Activated CD4-positive, alpha-beta T cell treated with anti-CD3 and anti-CD28 coated beads for 36 hours (primary cell): ENCODE measurements at regions of chr1 and their contacts with region 1.

Region 1: DNA sequence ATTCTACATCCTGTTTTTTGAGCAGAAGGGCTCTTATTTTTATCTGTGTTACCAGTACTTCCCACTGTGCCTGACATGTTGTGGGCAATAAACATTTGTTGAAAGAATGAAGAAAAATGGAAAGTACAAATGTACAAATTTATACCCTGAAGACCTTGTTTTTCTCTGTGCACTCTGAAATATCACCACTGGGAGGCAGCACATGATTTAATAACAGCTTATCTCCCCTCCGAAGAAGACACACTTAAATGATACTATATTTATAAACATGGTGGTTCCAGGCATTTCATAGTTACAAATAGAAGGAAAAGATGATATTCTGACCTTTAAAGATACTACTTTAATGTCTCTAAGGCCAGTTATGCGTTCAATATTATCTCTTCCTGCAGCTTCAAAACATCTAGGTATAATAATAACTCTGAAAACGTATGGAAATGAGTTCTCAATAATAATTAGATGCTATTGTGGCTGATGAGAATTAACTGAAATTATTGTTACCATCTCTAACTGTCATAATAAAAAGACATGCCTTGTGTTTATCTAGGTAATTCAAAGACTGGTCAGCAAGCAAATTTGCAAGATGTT is 12.8 kb downstream of the DYNLT5 start:
- DNase-seq: peak; percentile 69
- ATAC-seq: peak; percentile 62
- H3K4me3 Mint-ChIP-seq: no peak overlapping the region
- H3K27ac Mint-ChIP-seq: no peak overlapping the region
- H3K4me1 Mint-ChIP-seq: peaks cover 22% of the 10 kb centered on the region
- H3K27me3 Mint-ChIP-seq: no peaks in the 10 kb centered on the region

Region 2: GRCh38 chr1:66752671-66753371 is 12.3 kb before region 1 on chr1:
- CTCF ChIA-PET with region 1: interaction called, 15 read pairs
- POLR2A ChIA-PET with region 1: no interaction called
- intact Hi-C with region 1: no loop called
- DNase-seq: no peak
- ATAC-seq: no peak
- H3K4me3 Mint-ChIP-seq: peak overlapping the region; percentile 53
- H3K27ac Mint-ChIP-seq: no peak overlapping the region
- H3K4me1 Mint-ChIP-seq: peaks cover 13% of the 10 kb centered on the region
- H3K27me3 Mint-ChIP-seq: peaks cover 37% of the 10 kb centered on the region

Region 3: DNA sequence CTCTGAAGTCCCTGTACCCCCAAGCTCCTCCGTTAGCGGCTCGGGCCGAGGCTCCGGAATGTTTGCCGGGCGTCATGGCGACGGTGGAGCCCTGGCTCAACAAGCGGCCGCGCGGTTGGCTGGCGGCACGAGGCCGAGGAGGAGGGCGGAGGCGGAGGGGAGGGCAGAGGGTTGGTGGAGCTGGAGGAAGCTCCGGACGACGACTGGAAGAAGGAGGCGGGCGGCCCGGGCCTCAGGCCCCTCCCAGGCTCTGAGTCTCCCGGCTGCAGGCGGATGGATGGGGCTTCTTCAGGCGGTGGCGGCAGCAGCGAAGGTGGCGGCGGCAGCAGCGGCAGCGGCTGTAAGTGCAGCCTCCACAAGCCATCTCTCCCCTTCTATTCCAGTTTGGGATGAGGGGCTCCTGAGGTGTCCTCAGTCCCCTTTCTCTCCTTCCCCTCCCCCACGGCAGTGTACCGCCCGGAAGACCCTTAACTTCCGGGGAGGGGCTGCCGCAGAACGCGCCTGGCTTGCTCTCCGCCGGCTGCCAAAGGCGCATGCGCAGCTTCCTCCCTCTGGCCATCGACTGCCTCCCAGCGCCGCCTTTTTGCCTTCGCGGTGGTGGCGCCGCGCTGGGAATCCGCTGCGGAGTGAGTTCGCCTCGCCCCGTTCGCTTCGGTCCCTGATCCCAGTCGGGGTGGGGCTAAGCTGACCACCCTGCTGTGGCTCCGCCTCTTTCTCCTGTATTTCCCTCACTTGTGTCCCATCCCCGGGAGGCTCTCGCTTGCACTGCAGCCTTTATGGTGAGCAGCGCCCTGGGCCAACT is 159.9 kb after region 1 on chr1 and contains the starts of genes DNAI4 and MIER1:
- CTCF ChIA-PET with region 1: interaction called, 4 read pairs
- POLR2A ChIA-PET with region 1: no interaction called
- intact Hi-C with region 1: loop called (anchors 2 kb)
- DNase-seq: peak; percentile 99
- ATAC-seq: peak; percentile 94
- H3K4me3 Mint-ChIP-seq: peak within 1 kb of the TSS; percentile 93
- H3K27ac Mint-ChIP-seq: peak within 1 kb of the TSS; percentile 92
- H3K4me1 Mint-ChIP-seq: peaks cover 52% of the 10 kb centered on the region
- H3K27me3 Mint-ChIP-seq: no peaks in the 10 kb centered on the region
- total RNA-seq, gene DNAI4: 0.87 to 3.6 TPM
- total RNA-seq, gene MIER1: 49.7 to 51.5 TPM

Region 4: DNA sequence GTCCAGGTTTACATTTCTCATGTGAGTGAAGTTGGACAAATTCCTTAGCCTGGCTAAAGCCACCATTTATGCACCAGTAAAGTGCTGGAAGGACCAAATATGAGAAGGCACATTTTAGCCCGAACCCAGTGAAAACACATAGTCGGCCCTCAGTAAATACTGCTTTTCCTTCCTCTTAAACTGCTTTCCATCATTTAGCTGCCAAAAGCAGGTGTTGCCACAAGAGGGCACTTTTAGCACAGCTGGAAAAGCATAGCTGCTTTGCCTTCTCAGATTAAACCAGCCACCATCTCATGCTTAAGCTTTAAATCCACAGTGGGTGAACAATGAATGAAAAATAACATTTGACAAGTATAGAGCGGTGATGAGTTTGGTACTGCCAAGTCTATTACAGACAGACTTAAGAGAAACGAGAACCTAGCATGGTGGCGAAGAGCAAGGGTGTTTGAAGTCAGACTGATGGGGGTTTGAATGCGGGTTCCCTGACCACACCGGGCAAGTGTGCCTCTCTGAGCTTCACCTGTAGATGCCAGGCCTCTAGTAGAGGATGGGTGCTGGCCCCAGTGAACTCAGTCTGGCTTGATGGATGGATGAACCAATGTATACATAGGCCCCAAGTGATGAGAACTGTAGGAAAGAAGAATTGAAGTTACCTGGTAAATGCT is 231.1 kb after region 1 on chr1:
- CTCF ChIA-PET with region 1: interaction called, 4 read pairs
- POLR2A ChIA-PET with region 1: no interaction called
- intact Hi-C with region 1: loop called in 1 of 2 experiments (anchors 2 kb)
- DNase-seq: peak; percentile 79
- ATAC-seq: peak; percentile 79
- H3K4me3 Mint-ChIP-seq: no peak overlapping the region
- H3K27ac Mint-ChIP-seq: peak overlapping the region; percentile 53
- H3K4me1 Mint-ChIP-seq: peaks cover 16% of the 10 kb centered on the region
- H3K27me3 Mint-ChIP-seq: no peaks in the 10 kb centered on the region

Region 5: DNA sequence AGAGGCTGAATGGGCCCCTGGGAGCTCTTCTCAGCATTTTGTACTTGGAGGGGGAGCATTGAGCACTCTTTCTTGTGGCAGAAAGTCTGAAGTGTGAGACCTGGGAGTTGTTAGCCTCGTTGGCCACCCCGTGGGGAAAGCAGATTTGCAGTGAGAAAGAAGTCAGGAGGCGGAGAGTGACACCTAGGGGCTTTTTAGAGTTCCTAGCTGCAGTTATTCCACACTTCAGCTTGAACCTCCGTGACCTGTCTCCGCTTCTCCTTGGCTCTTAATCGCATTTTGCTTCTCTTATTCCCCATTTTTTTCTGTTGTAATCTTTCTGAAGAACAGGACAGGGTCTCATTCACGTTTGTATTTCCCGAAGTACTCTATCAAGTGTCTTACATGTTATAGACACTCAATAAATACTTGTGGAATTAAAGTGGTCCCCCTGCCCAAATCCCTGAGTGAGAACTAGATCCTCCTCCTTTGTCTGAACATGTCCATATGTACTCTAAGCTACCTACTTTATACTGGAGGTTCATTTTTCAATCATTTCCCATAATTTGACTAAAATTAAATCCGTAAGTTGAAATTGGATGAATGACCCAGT is 384.2 kb after region 1 on chr1:
- CTCF ChIA-PET with region 1: interaction called, 40 read pairs
- POLR2A ChIA-PET with region 1: no interaction called
- intact Hi-C with region 1: loop called (anchors 1 kb)
- DNase-seq: peak; percentile 78
- ATAC-seq: peak; percentile 90
- H3K4me3 Mint-ChIP-seq: no peak overlapping the region
- H3K27ac Mint-ChIP-seq: peak overlapping the region; percentile 64
- H3K4me1 Mint-ChIP-seq: peaks cover 34% of the 10 kb centered on the region
- H3K27me3 Mint-ChIP-seq: peaks cover 16% of the 10 kb centered on the region